Activated T-helper 2 cell treated with anti-CD3 and anti-CD28 coated beads, Interferon-gamma antibody, Interleukin-2, Interleukin-4, amounts not matched to agents 10 μg/mL and 5 μg/mL and 100 μg/mL, durations not matched to agents 14 hours and 24 hours and 36 hours (primary cell): ENCODE measurements at regions of chr6 and their contacts with region 1.

Region 1: GRCh38 chr6:152572395-152573061 is 64.6 kb downstream of the SYNE1 start:
- DNase-seq: no peak
- H3K4me3 Mint-ChIP-seq: no peak overlapping the region
- H3K27ac Mint-ChIP-seq: no peak overlapping the region
- H3K4me1 Mint-ChIP-seq: no peaks in the 10 kb centered on the region
- H3K27me3 Mint-ChIP-seq: no peaks in the 10 kb centered on the region

Region 2: DNA sequence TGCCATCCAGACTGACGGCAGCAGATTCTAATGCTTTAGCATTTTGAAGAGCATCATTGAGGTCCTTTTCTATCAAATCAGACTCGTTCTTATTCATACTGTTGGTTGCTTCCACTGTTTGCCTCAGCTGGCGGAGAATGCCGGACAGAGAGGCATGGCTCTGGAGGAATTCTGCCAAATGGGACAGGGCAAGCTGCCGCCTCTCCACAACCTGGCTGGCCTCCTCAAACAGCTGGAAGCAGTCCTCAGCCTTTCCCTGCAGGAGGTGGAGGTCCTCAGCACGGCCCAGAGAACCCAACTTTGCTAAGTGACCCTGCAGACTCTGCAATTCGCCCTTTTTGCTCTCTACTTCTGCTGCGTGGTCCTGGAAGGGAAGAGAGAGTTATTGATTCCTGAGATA is 155.9 kb before region 1 on chr6:
- intact Hi-C with region 1: no loop called
- DNase-seq: no peak
- H3K4me3 Mint-ChIP-seq: no peak overlapping the region
- H3K27ac Mint-ChIP-seq: no peak overlapping the region
- H3K4me1 Mint-ChIP-seq: no peaks in the 10 kb centered on the region
- H3K27me3 Mint-ChIP-seq: no peaks in the 10 kb centered on the region

Region 3: GRCh38 chr6:152552616-152553209 is 19.8 kb before region 1 on chr6:
- intact Hi-C with region 1: no loop called
- DNase-seq: peak; percentile 11
- H3K4me3 Mint-ChIP-seq: no peak overlapping the region
- H3K27ac Mint-ChIP-seq: no peak overlapping the region
- H3K4me1 Mint-ChIP-seq: no peaks in the 10 kb centered on the region
- H3K27me3 Mint-ChIP-seq: no peaks in the 10 kb centered on the region

Region 4: DNA sequence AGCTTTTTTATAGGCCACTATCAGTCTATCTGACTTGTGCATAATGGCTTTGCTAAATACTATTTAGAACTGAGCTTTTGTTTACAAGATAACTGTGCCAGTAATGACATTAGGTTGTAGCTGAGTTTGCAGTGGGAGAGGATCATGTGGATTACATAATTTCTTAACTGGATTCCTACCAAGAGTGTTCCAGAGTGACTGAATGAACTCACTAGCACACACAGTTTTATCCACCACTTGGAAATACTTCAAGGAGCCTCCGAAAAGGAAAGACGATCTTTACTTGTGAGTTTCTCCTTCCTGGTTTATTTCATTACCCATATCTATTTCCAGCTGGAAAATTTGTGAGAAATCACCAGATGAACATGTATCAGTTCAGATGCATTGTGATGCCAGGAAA is 75.6 kb after region 1 on chr6:
- intact Hi-C with region 1: no loop called
- DNase-seq: no peak
- H3K4me3 Mint-ChIP-seq: no peak overlapping the region
- H3K27ac Mint-ChIP-seq: no peak overlapping the region
- H3K4me1 Mint-ChIP-seq: no peaks in the 10 kb centered on the region
- H3K27me3 Mint-ChIP-seq: peaks cover 5% of the 10 kb centered on the region

Region 5: DNA sequence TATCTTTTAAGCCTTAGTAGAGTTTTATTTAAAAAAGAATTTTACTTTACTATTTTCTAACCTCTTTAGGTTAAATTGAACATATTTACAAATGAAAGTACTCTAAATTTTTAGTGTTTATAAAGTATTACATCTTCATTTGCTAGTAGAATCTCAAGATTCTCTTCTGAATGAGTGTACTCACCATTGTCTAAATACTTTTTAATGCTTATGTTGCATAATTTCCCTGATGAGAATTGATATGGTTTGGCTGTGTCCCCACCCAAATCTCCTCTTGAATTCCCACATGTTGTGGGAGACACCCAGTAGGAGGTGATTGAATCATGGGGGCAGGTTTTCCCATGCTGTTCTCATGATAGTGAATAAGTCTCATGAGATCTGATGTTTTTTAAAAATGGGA is 231.6 kb after region 1 on chr6:
- intact Hi-C with region 1: loop called (anchors 5 kb)
- DNase-seq: no peak
- H3K4me3 Mint-ChIP-seq: no peak overlapping the region
- H3K27ac Mint-ChIP-seq: no peak overlapping the region
- H3K4me1 Mint-ChIP-seq: no peaks in the 10 kb centered on the region
- H3K27me3 Mint-ChIP-seq: no peaks in the 10 kb centered on the region